ENCODE measurements at regions of chr12 and their contacts with region 1.

Region 1: GRCh38 chr12:15856097-15856982 is 25.8 kb upstream of the STRAP start:
- DNase-seq: no peak

Region 2: GRCh38 chr12:15590180-15590826 is 266.0 kb before region 1 on chr12:
- intact Hi-C with region 1: loop called (anchors 2 to 5 kb)
- DNase-seq: no peak

Region 3: DNA sequence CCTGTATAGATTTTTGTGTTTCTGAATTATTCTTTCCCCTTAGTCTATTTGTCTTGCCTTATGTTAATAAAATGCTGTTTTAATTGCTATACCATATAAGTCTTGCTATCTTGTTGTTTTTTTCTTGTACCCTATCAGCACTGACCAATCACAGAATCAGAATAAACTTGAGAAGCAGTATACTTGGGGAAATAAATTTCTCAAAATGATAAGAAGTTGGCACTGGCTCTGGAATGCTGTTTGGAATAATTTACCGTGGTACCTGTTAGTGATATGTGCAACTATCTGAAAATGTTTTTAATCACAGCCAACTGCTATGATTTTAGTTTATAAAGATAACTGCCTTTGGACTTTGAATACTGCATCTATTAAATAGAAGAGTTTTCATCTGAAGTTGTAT is 29.2 kb before region 1 on chr12:
- intact Hi-C with region 1: loop called in 1 of 2 experiments (anchors 1 kb)
- DNase-seq: no peak